A673 (cell line): ENCODE measurements at regions of chr11 and their contacts with region 1.

Region 1: DNA sequence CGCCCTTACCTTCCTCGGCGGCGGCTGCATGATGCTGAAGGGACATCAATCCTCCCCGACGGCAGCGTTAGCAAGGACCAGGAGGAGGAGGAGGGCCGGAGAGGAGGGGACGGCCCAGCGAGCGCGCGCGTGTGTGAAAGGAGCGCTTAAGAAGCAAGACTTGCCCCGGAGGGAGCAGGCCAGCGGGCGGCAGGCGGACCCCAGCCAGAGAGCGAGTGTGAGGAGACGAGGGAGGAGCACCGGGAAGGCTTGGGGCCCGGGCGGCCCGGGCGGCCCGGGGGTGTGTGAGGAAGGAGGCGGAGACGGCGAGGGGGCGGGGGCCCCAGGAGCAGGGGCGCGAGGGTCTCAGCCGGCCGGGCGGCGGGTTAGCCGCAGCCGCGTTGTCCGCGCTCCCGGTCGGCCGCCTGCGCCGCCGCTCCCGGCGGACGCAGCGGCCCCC is 251 bp downstream of the FCHSD2 start:
- DNase-seq: peak; percentile 81
- H3K4me3 ChIP-seq: peak overlapping the region; percentile 98
- H3K27ac ChIP-seq: peak overlapping the region; percentile 90
- H3K4me1 ChIP-seq: peaks cover 15% of the 10 kb centered on the region
- H3K27me3 ChIP-seq: no peaks in the 10 kb centered on the region
- CTCF ChIP-seq: no peak

Region 2: DNA sequence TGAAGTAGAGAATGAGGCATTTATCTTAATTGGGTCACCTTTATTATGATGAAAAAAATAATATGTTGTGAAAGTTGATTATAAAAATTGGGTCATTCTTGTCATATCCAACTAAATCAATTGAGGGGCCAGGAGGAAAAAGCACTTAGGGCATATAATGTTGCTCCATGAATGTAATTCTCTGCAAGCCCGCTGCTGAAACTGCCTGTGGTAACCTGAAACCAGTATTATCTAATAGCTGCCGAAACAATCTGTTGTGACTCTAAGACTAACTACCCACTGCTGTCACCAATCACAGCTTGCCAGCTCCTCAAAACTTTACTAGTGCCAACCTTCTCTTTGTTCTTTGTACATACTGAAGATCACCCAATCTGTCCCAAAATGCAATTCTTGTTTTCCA is 211.9 kb before region 1 on chr11:
- CTCF ChIA-PET with region 1: no interaction called
- POLR2A ChIA-PET with region 1: no interaction called
- intact Hi-C with region 1: loop called (anchors 10 kb)
- DNase-seq: peak; percentile 72
- H3K4me3 ChIP-seq: no peak overlapping the region
- H3K27ac ChIP-seq: no peak overlapping the region
- H3K4me1 ChIP-seq: peaks cover 12% of the 10 kb centered on the region
- H3K27me3 ChIP-seq: no peaks in the 10 kb centered on the region
- CTCF ChIP-seq: no peak